ENCODE measurements at regions of chr7 and their contacts with region 1.

Region 1: DNA sequence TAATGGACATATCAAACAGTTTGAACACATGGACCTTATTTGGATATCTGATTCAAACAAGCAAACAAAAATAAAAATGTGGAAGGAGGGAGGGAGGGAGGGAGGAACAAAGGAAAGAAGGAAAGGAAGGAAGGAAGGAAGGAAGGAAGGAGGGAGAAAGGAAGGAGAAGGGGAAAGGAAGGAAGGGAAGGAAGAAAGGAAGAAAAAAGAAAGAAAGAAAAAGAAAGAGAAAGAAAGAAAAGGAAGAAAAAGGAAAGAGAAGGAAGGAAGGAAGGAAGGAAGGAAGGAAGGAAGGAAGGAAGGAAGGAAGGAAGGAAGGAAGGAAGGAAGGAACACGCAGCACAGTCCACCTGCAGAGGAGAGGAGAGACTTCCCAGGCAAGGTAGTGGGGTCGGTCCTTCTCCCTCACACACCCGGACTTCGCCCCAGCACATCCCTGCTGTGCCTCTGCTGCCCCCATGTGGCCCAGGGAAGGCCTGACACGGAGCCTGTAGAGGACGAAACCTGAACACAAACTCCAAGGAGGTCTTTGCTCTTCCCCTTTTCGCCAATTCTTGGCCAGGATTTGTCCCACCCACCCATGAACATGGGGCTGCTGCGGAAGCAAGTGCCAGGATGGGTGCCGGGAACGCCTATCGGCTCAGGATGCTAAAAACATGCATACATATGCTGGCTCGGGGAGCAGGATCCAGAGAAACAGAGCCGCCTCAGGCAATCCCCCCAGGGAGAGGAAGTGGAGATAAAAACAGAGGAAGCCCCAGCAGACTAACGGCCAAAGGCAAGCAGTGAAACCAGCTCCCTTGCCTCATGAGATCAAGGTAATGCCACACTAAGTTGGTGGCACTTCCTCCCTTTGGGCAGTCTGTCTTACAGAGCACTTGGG is 52.3 kb upstream of the DGKI start:
- DNase-seq: peak; percentile 86 to 91
- ATAC-seq: peak; percentile 93 to 97 (median 96)
- H3K4me3 ChIP-seq: peak overlapping the region; percentile 28
- H3K27ac ChIP-seq: no peak overlapping the region
- H3K4me1 ChIP-seq: peaks cover 14% of the 10 kb centered on the region
- H3K27me3 ChIP-seq: no peaks in the 10 kb centered on the region
- CTCF ChIP-seq: peak; percentile 92

Region 2: GRCh38 chr7:137606061-137606674 is 292.9 kb before region 1 on chr7:
- intact Hi-C with region 1: loop called in 1 of 2 experiments (anchors 2 kb)
- DNase-seq: no peak
- ATAC-seq: no peak
- H3K4me3 ChIP-seq: no peak overlapping the region
- H3K27ac ChIP-seq: no peak overlapping the region
- H3K4me1 ChIP-seq: no peaks in the 10 kb centered on the region
- H3K27me3 ChIP-seq: peaks cover 0 to 2% (median 0%) of the 10 kb centered on the region in 3 donors
- CTCF ChIP-seq: peak; percentile 51

Region 3: GRCh38 chr7:137656227-137656849 is 242.7 kb before region 1 on chr7:
- intact Hi-C with region 1: loop called (anchors 1 to 2 kb)
- DNase-seq: peak; percentile 73 to 80
- ATAC-seq: peak in 3 of 4 donors; percentile 68 to 84 (median 76)
- H3K4me3 ChIP-seq: no peak overlapping the region
- H3K27ac ChIP-seq: no peak overlapping the region
- H3K4me1 ChIP-seq: no peaks in the 10 kb centered on the region
- H3K27me3 ChIP-seq: peaks cover 0 to 4% (median 0%) of the 10 kb centered on the region in 3 donors
- CTCF ChIP-seq: peak; percentile 77

Region 4: DNA sequence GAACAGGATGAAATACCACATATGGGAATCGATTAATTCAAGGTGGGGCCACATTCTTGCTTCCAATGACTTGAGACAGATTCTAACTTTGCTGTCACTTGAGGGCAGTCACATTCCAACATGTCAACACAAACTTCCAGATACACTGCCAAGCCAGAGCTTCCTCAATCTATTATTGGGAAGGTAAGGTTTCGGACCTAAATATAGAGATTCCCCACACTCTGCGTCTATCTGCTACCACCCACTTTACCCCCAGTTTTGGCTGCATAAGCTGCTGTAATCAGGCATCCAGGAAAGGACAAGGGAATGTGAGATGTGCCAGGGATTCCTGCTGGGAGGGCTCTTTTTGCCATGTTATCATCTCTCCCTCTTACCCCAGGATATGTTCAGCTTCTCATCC is 31.8 kb before region 1 on chr7:
- intact Hi-C with region 1: loop called (anchors 2 to 5 kb)
- DNase-seq: no peak
- ATAC-seq: peak in 3 of 4 donors; percentile 16 to 56 (median 55)
- H3K4me3 ChIP-seq: no peak overlapping the region
- H3K27ac ChIP-seq: peak overlapping the region; percentile 47
- H3K4me1 ChIP-seq: peaks cover 8% of the 10 kb centered on the region
- H3K27me3 ChIP-seq: no peaks in the 10 kb centered on the region
- CTCF ChIP-seq: no peak

Region 5: DNA sequence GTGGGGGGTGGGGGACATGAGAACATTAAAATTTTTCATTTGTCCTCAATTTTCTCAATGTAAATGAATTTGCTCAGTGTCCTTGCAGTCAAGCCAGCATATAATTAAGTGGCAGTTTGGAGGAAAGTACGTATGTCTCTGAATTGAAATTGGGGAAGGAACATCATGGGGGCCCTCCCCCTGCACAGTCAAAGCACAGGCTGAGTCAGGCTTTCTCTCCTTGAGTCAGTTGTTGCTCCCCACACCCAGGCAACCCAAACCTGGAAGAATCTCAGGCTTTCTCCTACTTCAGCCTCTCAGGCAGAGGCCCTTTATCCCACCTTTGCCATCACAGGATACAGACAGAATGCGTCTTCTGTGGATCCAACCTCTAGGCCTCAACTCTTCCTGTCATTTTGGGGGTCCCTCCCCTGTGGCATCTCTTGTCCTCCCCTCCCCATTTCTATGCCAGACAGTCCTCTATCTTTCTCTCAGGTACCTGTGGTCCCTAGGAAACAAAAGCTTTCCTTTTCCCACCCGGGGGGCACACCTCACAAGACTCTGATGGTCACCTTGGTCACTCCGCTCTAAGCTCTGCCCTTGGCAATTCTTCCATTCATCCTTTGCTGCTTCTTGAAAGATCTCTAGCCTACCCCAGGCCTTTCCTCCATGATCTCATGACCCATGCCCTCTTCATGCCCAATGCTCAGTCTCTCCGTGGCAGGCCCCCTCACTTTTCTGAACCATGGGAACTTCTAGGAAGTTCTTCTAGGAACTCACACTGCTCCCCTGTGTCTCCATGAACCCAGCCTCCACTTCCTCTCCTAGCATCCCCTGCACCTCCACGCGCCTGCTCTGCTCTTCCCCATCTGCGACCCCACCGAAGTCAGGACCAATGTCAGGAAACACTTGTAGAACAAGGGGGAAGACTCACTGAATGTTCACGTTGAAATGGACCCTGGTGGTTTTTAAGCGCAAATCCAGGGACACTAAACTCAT is 62.4 kb after region 1 on chr7:
- intact Hi-C with region 1: no loop called
- DNase-seq: no peak
- ATAC-seq: no peak
- H3K4me3 ChIP-seq: no peak overlapping the region
- H3K27ac ChIP-seq: no peak overlapping the region
- H3K4me1 ChIP-seq: no peaks in the 10 kb centered on the region
- H3K27me3 ChIP-seq: no peaks in the 10 kb centered on the region
- CTCF ChIP-seq: no peak

Region 6: DNA sequence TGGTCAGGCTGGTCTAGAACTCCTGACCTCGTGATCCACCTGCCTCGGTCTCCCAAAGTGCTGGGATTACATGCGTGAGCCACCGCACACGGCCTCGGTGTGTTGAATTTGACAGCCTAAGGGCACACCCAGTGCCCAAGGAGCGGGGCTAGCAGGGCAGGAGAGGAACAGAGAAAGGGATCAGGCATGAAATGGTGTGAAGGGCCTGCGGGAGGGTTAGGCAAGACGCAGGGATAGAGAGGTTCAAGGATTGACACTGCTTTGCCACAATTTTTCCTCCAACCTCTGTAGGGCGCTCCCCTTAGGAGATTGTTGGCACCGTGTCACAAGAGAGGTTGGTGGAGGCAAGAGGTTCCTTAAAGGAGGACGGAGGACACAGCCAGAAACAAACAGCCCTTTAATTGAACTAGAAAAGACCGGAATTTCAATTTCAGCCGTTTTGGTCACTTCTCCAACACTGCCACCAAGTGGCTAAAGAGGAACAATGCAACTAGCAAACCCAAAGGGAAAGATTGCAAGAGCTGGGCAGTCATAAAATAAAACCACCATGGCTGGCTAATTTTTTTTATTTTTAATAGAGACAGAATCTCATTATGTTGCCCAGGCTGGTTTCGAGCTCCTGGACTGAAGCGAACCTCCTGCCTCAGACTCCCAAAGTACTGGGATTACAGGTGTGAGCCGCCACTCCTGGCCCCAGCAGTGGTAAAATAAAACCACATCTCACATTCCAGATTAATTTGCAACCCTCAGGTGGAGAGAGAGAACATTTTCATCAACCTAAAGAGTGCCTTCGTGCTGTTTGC is 109.7 kb after region 1 on chr7:
- intact Hi-C with region 1: loop called (anchors 1 to 2 kb)
- DNase-seq: no peak
- ATAC-seq: peak; percentile 54 to 85 (median 66)
- H3K4me3 ChIP-seq: no peak overlapping the region
- H3K27ac ChIP-seq: no peak overlapping the region
- H3K4me1 ChIP-seq: no peaks in the 10 kb centered on the region
- H3K27me3 ChIP-seq: no peaks in the 10 kb centered on the region
- CTCF ChIP-seq: peak; percentile 96

Region 7: DNA sequence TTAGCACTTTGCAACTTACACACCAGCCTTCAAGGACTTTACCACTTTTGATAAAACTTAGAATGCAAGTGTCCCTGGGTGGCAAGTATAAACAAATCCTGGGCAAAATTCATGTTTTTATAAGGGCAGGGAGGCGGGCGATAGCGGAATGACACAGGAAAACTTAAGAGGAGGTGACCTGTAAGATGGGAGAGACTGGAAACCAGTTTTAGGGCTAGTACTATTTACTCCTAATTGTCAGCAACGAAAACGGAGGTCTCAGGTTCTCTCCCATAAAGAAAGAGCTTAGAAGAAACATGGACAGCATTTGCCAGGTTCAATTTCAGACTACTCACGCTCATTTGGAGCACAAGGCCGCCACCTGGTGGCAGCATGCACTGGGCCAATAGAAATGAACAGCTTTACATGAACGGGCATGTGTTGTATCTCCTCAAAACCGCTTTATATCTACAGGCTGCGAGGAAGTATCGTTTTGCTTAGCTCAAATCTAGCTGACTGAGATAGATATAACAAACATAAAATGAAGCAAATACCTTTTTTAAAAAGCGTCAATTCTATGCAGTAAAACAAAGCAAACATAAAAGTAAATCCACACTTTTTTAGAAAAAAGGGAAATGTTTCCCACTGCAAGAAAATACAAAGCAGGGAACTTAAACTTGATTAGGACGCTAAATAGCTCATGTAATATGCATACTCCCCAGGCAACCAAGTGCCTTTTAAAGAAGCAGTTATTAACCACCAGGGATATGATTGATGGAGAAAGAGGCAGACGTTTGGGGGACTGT is 839.7 kb after region 1 on chr7:
- intact Hi-C with region 1: loop called in 1 of 2 experiments (anchors 10 kb)
- DNase-seq: peak; percentile 74 to 83
- ATAC-seq: peak; percentile 56 to 81 (median 69)
- H3K4me3 ChIP-seq: no peak overlapping the region
- H3K27ac ChIP-seq: no peak overlapping the region
- H3K4me1 ChIP-seq: no peaks in the 10 kb centered on the region
- H3K27me3 ChIP-seq: no peaks in the 10 kb centered on the region
- CTCF ChIP-seq: peak; percentile 87

Measured in psoas muscle (tissue), 8 donors.